ENCODE measurements at regions of chr3 and their contacts with region 1.

Region 1: DNA sequence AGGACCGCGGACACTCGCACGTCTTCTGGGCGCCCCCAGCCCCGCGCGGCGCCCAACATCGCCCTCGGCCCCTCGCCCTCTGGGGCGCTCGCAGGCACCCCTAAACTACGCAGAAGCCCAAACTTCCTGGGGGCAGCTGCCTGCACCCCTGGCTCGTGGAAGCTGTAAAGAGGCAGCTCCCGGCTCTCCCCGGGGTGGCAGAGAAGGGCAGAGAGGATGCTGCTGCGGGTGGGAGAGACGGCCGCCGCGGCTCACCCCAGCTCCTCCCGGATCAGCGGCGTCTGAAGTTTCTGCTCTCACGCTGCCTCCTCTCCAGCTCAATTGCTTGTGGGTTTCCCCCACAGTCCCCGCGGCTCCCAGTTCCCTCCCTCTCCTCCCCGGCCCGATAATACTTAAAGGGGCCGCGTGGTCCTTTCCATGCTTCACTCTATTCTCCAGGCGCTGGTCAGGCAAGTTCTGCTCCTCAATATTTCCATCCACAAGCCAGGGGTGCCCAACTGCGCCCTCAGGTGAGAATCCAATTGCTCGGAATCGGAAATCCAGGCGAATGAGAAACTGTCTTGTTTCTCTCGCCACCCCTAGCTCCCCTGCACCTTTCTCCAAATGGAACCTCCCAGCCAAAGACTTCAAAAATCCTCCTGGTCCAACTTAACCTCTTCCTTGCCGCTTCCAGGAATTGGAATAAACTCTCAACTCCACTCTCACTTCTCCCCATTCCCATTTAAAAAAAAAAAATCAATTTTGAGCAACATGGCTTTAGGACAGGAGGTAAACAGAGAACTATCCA is 748.5 kb downstream of the ROBO1 start:
- DNase-seq: peak; percentile 84 to 90
- ATAC-seq: peak; percentile 93
- H3K4me3 ChIP-seq: peak overlapping the region; percentile 74 to 89
- H3K27ac ChIP-seq: peak overlapping the region in 1 of 2 donors; percentile 96
- H3K4me1 ChIP-seq: no peaks in the 10 kb centered on the region
- H3K27me3 ChIP-seq: no peaks in the 10 kb centered on the region

Region 2: GRCh38 chr3:78545827-78546226 is 473.5 kb before region 1 on chr3:
- intact Hi-C with region 1: no loop called
- DNase-seq: no peak
- ATAC-seq: no peak
- H3K4me3 ChIP-seq: no peak overlapping the region
- H3K27ac ChIP-seq: no peak overlapping the region
- H3K4me1 ChIP-seq: peaks cover 0 to 3% of the 10 kb centered on the region in 2 donors
- H3K27me3 ChIP-seq: no peaks in the 10 kb centered on the region

Region 3: GRCh38 chr3:78887547-78888011 is 131.8 kb before region 1 on chr3:
- intact Hi-C with region 1: loop called in 1 of 2 experiments (anchors 10 kb)
- DNase-seq: no peak
- ATAC-seq: peak; percentile 41
- H3K4me3 ChIP-seq: peak overlapping the region in 1 of 2 donors; percentile 10
- H3K27ac ChIP-seq: no peak overlapping the region
- H3K4me1 ChIP-seq: no peaks in the 10 kb centered on the region
- H3K27me3 ChIP-seq: no peaks in the 10 kb centered on the region

Region 4: DNA sequence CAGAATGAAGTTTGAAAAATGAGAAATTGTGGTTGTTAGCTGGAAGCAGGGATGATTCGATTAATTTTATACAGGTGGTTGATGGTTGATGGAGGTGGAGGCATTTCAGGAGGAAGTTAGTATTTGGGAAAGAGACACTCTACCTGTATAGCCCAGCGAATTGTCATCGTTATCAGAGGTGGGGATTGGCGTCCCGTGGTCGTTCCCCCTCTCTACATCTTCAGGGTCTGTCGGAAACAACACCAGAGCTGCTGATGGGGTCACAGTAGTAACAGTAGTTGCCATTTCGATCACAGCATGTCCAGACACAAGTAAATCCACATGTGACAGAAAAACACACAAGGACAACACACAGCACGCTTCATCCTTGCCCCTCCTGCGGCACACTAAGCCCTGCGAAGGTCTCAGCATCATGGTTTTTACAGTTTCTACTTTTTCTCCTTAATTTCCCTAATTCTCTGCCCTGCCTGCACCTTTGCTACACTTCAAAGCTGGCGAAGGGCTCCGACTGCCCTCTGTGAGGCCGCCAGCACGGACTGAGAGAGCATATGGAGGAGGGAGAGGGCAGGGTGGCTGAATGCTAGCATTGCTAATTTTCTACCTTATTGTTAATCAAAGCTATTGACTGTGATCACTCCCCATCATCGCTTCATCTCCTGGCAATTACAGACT is 106.1 kb after region 1 on chr3:
- intact Hi-C with region 1: no loop called
- DNase-seq: no peak
- ATAC-seq: no peak
- H3K4me3 ChIP-seq: no peak overlapping the region
- H3K27ac ChIP-seq: no peak overlapping the region
- H3K4me1 ChIP-seq: no peaks in the 10 kb centered on the region
- H3K27me3 ChIP-seq: no peaks in the 10 kb centered on the region

Measured in aorta (tissue), 5 donors.